ENCODE measurements at regions of chr10 and their contacts with region 1.

Region 1: DNA sequence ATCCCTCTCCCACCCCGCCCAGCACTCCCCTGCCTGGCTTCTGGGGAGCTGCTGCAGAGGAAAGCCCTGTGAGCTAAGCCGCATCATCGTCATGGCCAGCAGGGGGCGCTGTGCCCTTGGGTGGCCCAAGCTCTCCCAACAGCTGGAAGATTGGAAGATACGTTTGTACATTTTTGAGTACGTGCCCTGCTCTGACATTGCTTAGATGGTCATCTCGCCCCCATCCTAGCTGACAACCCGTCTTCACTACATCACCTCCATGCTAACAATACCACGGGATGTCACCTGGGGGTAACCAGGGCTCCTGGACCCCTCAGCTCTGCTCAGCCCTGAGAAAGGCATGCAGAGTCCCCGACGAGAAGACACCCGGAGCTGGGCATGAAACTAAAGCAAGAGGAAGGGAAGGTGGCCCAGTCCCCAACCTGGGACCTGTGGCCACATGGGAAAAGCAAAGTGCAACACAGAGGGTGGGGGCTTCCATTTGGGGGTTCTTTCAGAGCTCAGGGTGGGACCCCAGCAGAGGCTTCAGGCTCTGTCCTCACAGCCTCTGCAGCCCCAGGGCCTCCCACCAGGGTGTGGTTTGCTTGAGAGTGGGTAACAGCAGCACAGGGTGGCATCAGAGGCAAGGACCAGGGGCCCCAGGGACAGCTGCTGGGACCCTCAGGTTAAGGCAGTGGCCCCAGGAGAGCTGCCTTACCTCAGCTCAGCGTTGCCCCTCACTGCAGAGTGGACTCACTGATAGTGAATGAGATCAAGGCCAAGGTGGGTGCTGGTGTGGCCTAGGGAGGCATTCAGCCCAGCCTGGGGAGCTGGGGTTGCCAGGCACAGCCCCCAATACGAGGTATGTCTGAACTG is 136.7 kb downstream of the PTPN20 start:
- DNase-seq: peak; percentile 46
- H3K4me3 ChIP-seq: no peak overlapping the region
- H3K27ac ChIP-seq: no peak overlapping the region
- H3K4me1 ChIP-seq: no peaks in the 10 kb centered on the region
- H3K27me3 ChIP-seq: no peaks in the 10 kb centered on the region
- CTCF ChIP-seq: peak; percentile 77 to 89
- POLR2A ChIP-seq: no peak

Region 2: GRCh38 chr10:47024399-47025252 is 23.3 kb before region 1 on chr10:
- CTCF ChIA-PET with region 1: interaction called, 13 read pairs
- POLR2A ChIA-PET with region 1: no interaction called
- dilution Hi-C with region 1: no loop called
- intact Hi-C with region 1: no loop called
- DNase-seq: peak; percentile 45
- H3K4me3 ChIP-seq: no peak overlapping the region
- H3K27ac ChIP-seq: no peak overlapping the region
- H3K4me1 ChIP-seq: no peaks in the 10 kb centered on the region
- H3K27me3 ChIP-seq: no peaks in the 10 kb centered on the region
- CTCF ChIP-seq: peak; percentile 66 to 87
- POLR2A ChIP-seq: no peak

Region 3: GRCh38 chr10:47031211-47031900 is 16.5 kb before region 1 on chr10:
- CTCF ChIA-PET with region 1: interaction called, 10 read pairs
- POLR2A ChIA-PET with region 1: no interaction called
- dilution Hi-C with region 1: no loop called
- intact Hi-C with region 1: no loop called
- DNase-seq: no peak
- H3K4me3 ChIP-seq: no peak overlapping the region
- H3K27ac ChIP-seq: no peak overlapping the region
- H3K4me1 ChIP-seq: no peaks in the 10 kb centered on the region
- H3K27me3 ChIP-seq: no peaks in the 10 kb centered on the region
- CTCF ChIP-seq: no peak
- POLR2A ChIP-seq: no peak

Region 4: GRCh38 chr10:47340608-47341170 is 292.8 kb after region 1 on chr10:
- CTCF ChIA-PET with region 1: interaction called, 49 read pairs
- POLR2A ChIA-PET with region 1: no interaction called
- dilution Hi-C with region 1: no loop called
- intact Hi-C with region 1: loop called (anchors 1 kb)
- DNase-seq: peak; percentile 64
- H3K4me3 ChIP-seq: no peak overlapping the region
- H3K27ac ChIP-seq: no peak overlapping the region
- H3K4me1 ChIP-seq: no peaks in the 10 kb centered on the region
- H3K27me3 ChIP-seq: peaks cover 0 to 8% of the 10 kb centered on the region in 2 experiments
- CTCF ChIP-seq: peak; percentile 91 to 97
- POLR2A ChIP-seq: no peak

Measured in endothelial cell of umbilical vein (primary cell).